ENCODE measurements at regions of chr16 and their contacts with region 1.

Region 1: DNA sequence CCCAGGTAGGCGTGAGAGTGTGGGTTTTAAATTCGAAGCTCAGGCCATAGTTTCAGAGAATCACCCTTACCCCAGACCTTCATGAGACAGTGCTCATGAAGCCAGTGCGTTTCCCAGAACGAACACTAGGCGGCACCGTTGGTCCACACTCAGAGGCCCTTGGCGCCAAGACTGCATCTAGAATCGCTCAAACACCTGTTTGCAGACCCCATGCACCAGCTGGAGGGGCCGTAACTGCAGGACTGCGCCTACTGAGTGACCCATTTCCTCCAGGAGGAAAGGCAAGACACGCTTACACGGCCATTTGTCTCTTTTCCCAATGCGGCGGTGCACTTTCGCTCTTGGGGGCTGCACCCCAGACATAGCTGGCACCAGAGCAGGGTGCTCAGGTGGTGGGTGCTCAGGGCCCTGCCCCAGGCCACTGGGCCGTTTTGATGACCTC is 34.0 kb downstream of the ADGRG5 start:
- DNase-seq: peak; percentile 80 to 89 (median 85)
- H3K4me3 ChIP-seq: no peak overlapping the region
- H3K27ac ChIP-seq: no peak overlapping the region
- H3K4me1 ChIP-seq: peaks cover 0 to 2% (median 0%) of the 10 kb centered on the region in 3 donors
- H3K27me3 ChIP-seq: no peaks in the 10 kb centered on the region
- CTCF ChIP-seq: peak; percentile 91

Region 2: DNA sequence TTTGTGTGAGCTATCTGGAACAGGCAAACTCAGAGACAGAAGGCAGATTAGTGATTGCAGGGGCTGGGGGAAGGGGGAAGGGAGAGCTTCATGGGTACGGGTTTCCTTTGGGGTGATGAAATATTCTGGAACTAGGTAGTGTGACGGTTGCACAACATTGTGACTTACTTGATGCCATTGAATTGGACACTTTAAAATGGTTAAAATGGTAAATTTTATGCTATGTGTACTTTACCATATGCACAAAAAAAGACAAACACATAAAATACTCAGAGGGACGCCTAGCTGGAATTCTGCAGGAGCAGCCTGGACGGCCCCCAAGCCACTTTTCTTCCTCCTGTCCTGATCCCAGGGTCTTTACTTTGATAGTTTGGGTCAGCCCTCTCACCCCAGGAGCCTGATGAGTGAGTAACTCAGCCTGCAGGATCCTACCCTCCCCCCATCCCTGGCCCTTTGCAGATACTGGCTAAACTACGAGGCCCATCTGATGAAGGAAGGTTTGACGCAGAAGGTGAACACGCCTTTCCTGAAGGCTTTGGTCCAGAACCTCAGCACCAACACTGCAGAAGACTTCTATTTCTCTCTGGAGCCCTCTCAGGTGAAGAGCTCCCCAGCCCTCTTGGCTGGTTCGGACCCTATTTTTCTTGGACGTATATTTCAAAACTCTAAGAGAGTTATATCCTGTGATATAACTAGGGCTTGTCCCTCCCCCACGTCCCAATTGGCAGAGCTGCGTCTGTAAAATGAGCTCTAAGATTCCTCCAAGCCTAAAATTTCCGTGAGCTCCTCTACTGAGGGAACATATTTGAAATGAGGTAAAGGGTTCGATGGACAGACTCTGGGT is 99.5 kb after region 1 on chr16:
- intact Hi-C with region 1: no loop called
- DNase-seq: peak in 1 of 5 donors; percentile 47
- H3K4me3 ChIP-seq: no peak overlapping the region
- H3K27ac ChIP-seq: no peak overlapping the region
- H3K4me1 ChIP-seq: no peaks in the 10 kb centered on the region
- H3K27me3 ChIP-seq: no peaks in the 10 kb centered on the region
- CTCF ChIP-seq: no peak

Region 3: GRCh38 chr16:57704011-57704904 is 127.8 kb after region 1 on chr16:
- intact Hi-C with region 1: no loop called
- DNase-seq: no peak
- H3K4me3 ChIP-seq: no peak overlapping the region
- H3K27ac ChIP-seq: no peak overlapping the region
- H3K4me1 ChIP-seq: no peaks in the 10 kb centered on the region
- H3K27me3 ChIP-seq: no peaks in the 10 kb centered on the region
- CTCF ChIP-seq: no peak

Region 4: DNA sequence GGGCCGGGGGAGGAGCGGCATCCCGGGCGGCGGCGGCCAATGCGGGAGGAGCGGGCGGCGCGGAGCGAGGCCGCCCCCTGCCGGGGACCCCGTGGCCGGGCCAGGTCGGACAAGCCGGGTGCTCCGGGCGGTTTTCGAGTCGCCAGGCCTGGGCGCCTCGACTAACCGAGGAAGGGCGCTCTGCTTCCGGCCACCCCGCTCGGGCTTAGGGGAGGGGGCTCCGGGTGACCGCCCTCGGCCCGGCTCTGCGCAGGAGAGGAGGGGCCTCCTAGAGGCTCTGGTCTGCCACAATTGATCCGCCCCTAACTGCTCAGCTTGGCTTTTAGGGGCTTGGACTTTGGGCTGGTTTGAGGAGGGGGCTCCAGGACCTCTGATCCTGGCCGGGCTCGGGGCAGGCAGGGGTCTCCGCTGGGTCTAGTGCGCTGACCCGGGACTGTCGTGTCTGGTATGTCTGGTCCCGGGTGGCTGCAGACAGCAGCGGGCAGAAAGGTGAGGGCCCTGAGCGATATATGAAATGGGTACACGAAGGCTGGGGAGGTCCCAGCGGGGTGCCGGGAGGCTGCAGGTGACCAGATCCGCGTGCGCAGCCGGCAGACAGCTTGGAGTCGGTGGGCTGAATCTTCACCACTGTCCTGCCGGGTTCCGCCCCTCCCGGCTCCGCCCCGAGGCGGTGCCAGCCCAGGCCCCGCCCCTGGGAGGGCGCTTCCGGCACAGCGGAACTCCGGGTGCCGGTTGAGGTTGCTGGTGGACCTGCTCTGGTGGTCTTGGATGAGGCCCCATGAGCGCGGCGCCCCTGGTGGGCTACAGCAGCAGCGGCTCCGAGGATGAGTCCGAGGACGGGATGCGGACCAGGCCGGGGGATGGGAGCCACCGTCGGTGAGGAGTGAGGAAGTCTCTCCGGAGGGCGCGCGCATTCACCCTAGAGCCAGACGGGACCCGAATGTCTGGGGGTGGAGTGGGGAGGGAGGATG is 424.5 kb after region 1 on chr16 and contains the start of gene USB1:
- intact Hi-C with region 1: loop called (anchors 10 kb)
- DNase-seq: peak; percentile 93 to 96 (median 95)
- H3K4me3 ChIP-seq: peak within 1 kb of the TSS; percentile 62 to 82 (median 78)
- H3K27ac ChIP-seq: peak within 1 kb of the TSS; percentile 85 to 86
- H3K4me1 ChIP-seq: peaks cover 3 to 20% (median 5%) of the 10 kb centered on the region in 3 donors
- H3K27me3 ChIP-seq: no peaks in the 10 kb centered on the region
- CTCF ChIP-seq: peak; percentile 75
- total RNA-seq, gene USB1: 32.8 TPM